Activated CD4-positive, alpha-beta T cell treated with anti-CD3 and anti-CD28 coated beads for 36 hours (primary cell): ENCODE measurements at regions of chrX and their contacts with region 1.

Region 1: DNA sequence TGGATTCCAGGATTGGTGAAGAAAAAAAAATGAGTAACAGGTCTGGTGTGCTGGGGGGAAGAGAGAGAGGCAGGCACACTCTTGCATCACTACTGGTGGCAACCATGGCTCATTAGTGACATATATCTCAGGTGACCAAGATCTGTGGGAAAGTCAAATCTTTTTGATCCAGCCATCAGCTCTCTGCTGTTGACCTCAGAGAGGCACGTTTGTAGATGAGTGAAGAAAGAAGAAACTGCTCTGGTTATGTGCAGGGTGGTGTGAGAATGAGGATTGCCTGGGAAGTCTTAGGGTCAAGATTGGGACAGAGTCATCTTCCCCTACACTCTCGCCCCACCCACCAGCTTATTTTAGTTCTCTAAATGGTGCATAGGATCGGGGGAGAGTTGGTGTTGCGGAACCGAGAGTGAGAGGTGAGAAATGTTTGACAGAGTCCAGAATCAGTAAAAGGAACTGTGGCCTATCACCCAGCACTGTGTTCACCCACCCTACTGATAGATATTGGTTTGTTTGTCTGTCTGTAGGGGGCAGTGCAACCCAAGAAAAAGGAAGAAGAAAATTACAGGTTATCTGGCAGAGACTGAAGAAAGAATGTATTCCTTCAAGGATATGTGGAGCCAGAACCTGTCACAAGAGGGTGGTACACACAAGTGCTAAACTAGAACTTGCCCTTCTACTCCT is 21.9 kb downstream of the ARMCX6 start:
- DNase-seq: peak; percentile 26
- ATAC-seq: peak; percentile 76
- H3K4me3 Mint-ChIP-seq: no peak overlapping the region
- H3K27ac Mint-ChIP-seq: no peak overlapping the region
- H3K4me1 Mint-ChIP-seq: no peaks in the 10 kb centered on the region
- H3K27me3 Mint-ChIP-seq: peaks cover 11% of the 10 kb centered on the region

Region 2: GRCh38 chrX:101191217-101191750 is 404.6 kb before region 1 on chrX:
- CTCF ChIA-PET with region 1: no interaction called
- POLR2A ChIA-PET with region 1: no interaction called
- intact Hi-C with region 1: no loop called
- DNase-seq: no peak
- ATAC-seq: no peak
- H3K4me3 Mint-ChIP-seq: no peak overlapping the region
- H3K27ac Mint-ChIP-seq: no peak overlapping the region
- H3K4me1 Mint-ChIP-seq: peaks cover 5% of the 10 kb centered on the region
- H3K27me3 Mint-ChIP-seq: peaks cover 11% of the 10 kb centered on the region

Region 3: DNA sequence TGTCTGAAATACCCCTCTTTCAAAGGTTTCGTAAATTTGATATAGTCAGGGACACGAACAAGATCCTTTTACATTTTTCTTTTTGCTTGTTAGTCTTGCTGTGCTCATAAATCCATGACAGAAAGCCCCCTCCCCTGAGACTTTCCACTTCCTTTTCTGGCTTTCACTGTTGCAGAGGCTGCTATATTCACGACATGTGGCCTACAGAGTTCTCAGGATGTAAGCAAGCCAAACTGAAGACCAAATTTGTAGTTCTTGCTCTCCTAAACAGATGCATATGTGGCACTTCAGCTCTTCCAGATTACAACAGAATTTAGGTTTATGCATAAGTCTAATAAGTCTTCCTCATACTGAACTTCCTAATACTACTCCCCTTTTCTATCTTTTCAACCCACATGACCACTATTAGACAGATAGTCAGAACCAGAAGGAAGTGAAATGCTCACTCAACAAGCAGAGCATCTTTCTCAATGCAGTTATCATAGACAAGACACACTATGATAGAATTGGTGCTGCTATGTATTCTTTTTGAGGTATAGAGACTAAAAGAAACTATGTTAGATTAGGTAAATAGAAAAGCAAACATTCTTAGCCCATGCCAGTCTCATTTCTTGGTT is 224.9 kb before region 1 on chrX:
- CTCF ChIA-PET with region 1: no interaction called
- POLR2A ChIA-PET with region 1: no interaction called
- intact Hi-C with region 1: no loop called
- DNase-seq: no peak
- ATAC-seq: no peak
- H3K4me3 Mint-ChIP-seq: no peak overlapping the region
- H3K27ac Mint-ChIP-seq: no peak overlapping the region
- H3K4me1 Mint-ChIP-seq: peaks cover 2% of the 10 kb centered on the region
- H3K27me3 Mint-ChIP-seq: no peaks in the 10 kb centered on the region

Region 4: DNA sequence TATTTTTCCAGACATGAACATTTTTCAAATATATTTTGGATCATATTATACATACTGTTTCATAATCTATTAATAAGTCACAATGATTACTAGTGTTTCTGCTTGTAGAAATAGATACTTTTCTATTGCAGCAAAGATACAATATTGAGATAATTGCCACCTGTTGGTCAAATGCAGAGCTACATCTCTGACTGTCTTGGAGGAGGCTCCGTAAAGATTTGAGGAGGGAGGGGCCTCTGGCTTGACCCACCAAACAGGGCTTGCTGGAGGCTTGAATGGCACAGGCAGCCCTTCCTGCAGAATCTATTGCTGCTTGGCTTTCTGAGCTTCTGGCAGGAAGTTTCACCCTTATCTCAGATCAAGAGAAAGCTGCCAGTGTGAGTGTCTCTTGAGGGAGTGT is 163.1 kb after region 1 on chrX:
- CTCF ChIA-PET with region 1: no interaction called
- POLR2A ChIA-PET with region 1: no interaction called
- intact Hi-C with region 1: loop called in 1 of 2 experiments (anchors 5 kb)
- DNase-seq: peak; percentile 37
- ATAC-seq: peak; percentile 74
- H3K4me3 Mint-ChIP-seq: no peak overlapping the region
- H3K27ac Mint-ChIP-seq: no peak overlapping the region
- H3K4me1 Mint-ChIP-seq: peaks cover 3% of the 10 kb centered on the region
- H3K27me3 Mint-ChIP-seq: peaks cover 4% of the 10 kb centered on the region

Region 5: DNA sequence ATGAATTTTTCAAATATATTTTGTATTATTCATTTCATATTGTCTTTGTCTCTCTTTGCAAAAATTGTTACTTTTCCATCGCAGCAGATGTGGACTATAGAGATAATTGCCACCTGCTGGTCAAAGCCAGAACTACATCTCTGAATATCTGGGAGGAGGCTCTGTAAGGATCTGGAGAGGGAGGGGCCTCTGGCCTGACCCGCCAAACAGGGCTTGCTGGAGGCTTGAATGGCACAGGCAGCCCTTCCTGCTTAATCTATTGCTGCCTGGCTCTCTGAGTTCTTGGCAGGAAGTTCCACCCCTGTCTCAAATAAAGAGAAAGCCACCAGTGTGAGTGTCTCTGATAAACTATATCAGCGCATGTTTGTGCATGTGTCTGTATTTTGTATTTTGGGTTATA is 203.5 kb after region 1 on chrX:
- CTCF ChIA-PET with region 1: interaction called, 3 read pairs
- POLR2A ChIA-PET with region 1: no interaction called
- intact Hi-C with region 1: loop called (anchors 5 kb)
- DNase-seq: peak; percentile 85
- ATAC-seq: peak; percentile 100
- H3K4me3 Mint-ChIP-seq: peak overlapping the region; percentile 63
- H3K27ac Mint-ChIP-seq: no peak overlapping the region
- H3K4me1 Mint-ChIP-seq: peaks cover 7% of the 10 kb centered on the region
- H3K27me3 Mint-ChIP-seq: no peaks in the 10 kb centered on the region

Region 6: GRCh38 chrX:102085706-102086105 is 489.8 kb after region 1 on chrX:
- CTCF ChIA-PET with region 1: no interaction called
- POLR2A ChIA-PET with region 1: no interaction called
- intact Hi-C with region 1: loop called in 1 of 2 experiments (anchors 5 kb)
- DNase-seq: peak; percentile 20
- ATAC-seq: no peak
- H3K4me3 Mint-ChIP-seq: no peak overlapping the region
- H3K27ac Mint-ChIP-seq: no peak overlapping the region
- H3K4me1 Mint-ChIP-seq: no peaks in the 10 kb centered on the region
- H3K27me3 Mint-ChIP-seq: peaks cover 12% of the 10 kb centered on the region